Activated CD4-positive, alpha-beta T cell treated with anti-CD3 and anti-CD28 coated beads, Interleukin-2, amount 10 ng/mL, durations not matched to agents 24 days and 14 days (primary cell): ENCODE measurements at regions of chr10 and their contacts with region 1.

Region 1: GRCh38 chr10:92848441-92849233 is at the start of gene EXOC6:
- DNase-seq: peak; percentile 94
- H3K4me3 Mint-ChIP-seq: peak within 1 kb of the TSS; percentile 81
- H3K27ac Mint-ChIP-seq: peak within 1 kb of the TSS; percentile 87
- H3K4me1 Mint-ChIP-seq: peaks cover 31% of the 10 kb centered on the region
- H3K27me3 Mint-ChIP-seq: no peaks in the 10 kb centered on the region
- total RNA-seq, gene EXOC6: 13.1 and 14.2 TPM in 2 replicates

Region 2: DNA sequence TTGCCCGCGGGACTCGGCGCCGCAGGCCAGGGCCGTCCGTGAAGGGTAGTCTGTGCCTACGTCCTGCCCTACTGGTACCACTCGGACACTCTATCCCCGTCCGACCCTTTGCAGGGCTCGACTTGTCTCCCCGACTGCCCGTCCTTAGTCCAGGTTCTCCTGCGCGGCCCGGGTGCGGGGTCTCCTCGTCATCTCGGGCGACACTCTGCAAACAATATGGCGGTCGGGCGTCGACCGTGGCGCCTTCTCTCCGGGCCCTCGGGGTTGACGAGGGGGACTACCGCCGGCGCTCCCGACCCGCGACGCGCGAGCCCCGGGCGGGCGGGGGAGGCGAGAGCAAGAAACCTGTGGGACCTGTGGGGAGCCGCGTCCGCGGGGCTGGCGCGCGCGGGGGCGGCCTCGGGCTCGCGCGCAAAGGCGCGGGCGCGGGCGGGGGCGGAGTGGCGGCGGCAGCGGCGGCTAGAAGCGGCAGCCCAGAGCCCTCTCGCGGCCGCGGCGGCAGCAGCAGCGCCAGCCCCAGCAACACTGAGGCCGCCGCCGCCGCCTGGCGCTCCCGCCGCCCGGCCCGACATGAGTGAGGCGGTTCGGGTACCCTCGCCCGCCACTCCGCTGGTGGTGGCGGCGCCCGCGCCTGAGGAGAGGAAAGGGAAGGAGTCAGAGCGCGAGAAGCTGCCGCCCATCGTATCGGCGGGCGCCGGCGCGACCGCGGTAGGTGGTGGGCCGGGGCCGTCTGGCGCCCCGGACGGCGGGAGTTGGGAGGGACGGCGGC is 1438.6 kb before region 1 on chr10 and contains the start of gene HECTD2:
- intact Hi-C with region 1: loop called (anchors 5 kb)
- DNase-seq: peak; percentile 94
- H3K4me3 Mint-ChIP-seq: peak within 1 kb of the TSS; percentile 93
- H3K27ac Mint-ChIP-seq: peak within 1 kb of the TSS; percentile 96
- H3K4me1 Mint-ChIP-seq: peaks cover 17% of the 10 kb centered on the region
- H3K27me3 Mint-ChIP-seq: peaks cover 25% of the 10 kb centered on the region
- total RNA-seq, gene HECTD2: 4.5 and 5.5 TPM in 2 replicates

Region 3: DNA sequence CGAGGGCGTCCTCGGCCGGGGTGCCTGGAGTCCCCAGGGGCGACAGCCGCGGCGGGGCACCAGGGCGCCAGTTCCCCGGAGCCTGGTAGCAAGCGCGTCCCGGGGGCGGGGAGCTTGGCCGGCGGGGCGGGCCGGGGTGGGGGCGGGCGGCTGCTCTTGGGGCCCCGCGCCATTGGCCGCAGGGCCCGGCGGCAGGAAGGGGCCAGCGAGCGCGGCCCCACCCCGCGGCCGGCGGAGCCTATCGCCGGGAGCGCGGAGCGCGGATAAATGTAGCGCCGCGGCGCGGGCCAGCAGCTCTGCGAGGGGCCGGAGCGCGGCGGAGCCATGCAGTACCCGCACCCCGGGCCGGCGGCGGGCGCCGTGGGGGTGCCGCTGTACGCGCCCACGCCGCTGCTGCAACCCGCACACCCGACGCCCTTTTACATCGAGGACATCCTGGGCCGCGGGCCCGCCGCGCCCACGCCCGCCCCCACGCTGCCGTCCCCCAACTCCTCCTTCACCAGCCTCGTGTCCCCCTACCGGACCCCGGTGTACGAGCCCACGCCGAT is 158.9 kb before region 1 on chr10 and contains the start of gene HHEX:
- intact Hi-C with region 1: loop called (anchors 2 kb)
- DNase-seq: peak; percentile 78
- H3K4me3 Mint-ChIP-seq: peak within 1 kb of the TSS; percentile 70
- H3K27ac Mint-ChIP-seq: no peak within 1 kb of the TSS
- H3K4me1 Mint-ChIP-seq: peaks cover 16% of the 10 kb centered on the region
- H3K27me3 Mint-ChIP-seq: peaks cover 72% of the 10 kb centered on the region
- total RNA-seq, gene HHEX: 0.19 and 0.31 TPM in 2 replicates

Region 4: DNA sequence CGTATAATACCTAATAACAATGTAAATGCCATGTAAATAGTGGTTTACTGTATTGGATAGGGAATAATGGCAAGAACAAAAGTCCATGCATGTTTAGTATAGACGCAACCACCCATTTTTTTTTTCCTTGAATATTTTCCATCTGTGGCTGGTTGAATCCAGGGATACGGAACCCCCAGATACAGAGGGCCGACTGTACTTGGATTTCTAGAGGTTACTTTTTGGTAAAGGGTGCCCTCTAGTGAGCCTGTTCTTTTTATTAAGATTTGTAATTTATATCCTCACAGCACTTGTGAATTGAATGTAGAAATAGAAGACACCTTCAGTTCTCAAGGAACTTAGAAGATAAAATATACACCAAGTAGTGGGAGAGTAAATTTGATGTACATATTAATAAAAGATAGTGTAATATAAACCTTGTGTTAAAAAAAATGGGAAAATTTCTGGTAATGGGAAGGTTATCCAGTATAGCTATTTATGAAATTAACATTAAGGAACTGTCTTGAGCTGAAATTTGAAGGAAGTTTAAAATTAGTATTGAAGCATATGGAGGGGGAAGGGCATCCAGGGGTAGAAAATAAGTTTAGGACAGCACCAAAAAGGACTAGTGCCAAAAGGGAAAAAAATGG is 31.7 kb after region 1 on chr10:
- intact Hi-C with region 1: loop called (anchors 1 kb)
- DNase-seq: peak; percentile 63
- H3K4me3 Mint-ChIP-seq: no peak overlapping the region
- H3K27ac Mint-ChIP-seq: no peak overlapping the region
- H3K4me1 Mint-ChIP-seq: peaks cover 8% of the 10 kb centered on the region
- H3K27me3 Mint-ChIP-seq: peaks cover 3% of the 10 kb centered on the region

Region 5: DNA sequence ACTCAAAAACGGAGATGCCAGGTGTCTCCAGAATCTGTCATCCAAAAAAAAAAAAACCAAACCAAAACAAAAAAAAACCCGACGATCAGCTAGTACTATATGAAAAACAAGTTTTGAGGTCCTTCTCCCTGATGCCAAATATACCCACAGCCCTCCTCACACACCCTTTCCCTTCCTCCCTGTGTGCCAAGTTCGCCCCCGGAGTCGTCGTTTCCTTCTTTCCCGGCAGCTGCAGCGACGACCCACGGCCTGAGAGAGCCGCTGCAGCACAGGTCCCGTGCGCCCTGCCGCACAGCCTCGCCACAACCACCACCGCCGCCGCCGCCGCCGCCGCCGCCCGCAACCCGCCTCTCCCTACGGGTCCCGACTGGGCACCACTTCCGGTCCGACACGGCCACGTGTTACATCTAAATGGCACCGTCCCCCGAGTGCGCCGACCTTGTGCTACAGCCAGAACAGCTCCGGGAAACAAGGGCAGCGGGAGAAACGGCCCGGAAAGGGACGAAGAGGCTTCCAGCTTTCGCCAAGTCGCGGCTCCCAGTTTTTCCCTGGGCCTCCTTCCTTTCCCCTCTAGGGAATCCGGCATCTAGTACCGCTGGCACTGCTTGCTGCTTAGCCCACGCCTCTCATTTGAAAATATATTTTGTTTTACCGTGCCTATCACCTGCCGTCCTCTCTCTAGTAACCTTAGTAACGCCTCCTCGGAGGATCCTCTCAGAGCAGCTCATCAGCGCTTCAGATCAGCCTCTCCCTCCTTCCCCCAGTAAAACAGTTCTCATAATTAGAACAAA is 853.8 kb after region 1 on chr10 and contains the start of gene FRA10AC1:
- intact Hi-C with region 1: loop called (anchors 2 kb)
- DNase-seq: peak; percentile 97
- H3K4me3 Mint-ChIP-seq: no peak within 1 kb of the TSS
- H3K27ac Mint-ChIP-seq: no peak within 1 kb of the TSS
- H3K4me1 Mint-ChIP-seq: peaks cover 10% of the 10 kb centered on the region
- H3K27me3 Mint-ChIP-seq: no peaks in the 10 kb centered on the region
- total RNA-seq, gene FRA10AC1: 22.5 and 22.8 TPM in 2 replicates